ENCODE measurements at regions of chr2 and their contacts with region 1.

Region 1: GRCh38 chr2:37196320-37197195 is at the start of gene CEBPZOS:
- DNase-seq: peak; percentile 69 to 78
- H3K4me3 ChIP-seq: peak within 1 kb of the TSS; percentile 65
- H3K27ac ChIP-seq: peak within 1 kb of the TSS; percentile 41
- H3K4me1 ChIP-seq: peaks cover 16% of the 10 kb centered on the region
- H3K27me3 ChIP-seq: no peaks in the 10 kb centered on the region
- CTCF ChIP-seq: no peak
- total RNA-seq, gene CEBPZOS: 46.5 and 53.2 TPM in 2 replicates

Region 2: DNA sequence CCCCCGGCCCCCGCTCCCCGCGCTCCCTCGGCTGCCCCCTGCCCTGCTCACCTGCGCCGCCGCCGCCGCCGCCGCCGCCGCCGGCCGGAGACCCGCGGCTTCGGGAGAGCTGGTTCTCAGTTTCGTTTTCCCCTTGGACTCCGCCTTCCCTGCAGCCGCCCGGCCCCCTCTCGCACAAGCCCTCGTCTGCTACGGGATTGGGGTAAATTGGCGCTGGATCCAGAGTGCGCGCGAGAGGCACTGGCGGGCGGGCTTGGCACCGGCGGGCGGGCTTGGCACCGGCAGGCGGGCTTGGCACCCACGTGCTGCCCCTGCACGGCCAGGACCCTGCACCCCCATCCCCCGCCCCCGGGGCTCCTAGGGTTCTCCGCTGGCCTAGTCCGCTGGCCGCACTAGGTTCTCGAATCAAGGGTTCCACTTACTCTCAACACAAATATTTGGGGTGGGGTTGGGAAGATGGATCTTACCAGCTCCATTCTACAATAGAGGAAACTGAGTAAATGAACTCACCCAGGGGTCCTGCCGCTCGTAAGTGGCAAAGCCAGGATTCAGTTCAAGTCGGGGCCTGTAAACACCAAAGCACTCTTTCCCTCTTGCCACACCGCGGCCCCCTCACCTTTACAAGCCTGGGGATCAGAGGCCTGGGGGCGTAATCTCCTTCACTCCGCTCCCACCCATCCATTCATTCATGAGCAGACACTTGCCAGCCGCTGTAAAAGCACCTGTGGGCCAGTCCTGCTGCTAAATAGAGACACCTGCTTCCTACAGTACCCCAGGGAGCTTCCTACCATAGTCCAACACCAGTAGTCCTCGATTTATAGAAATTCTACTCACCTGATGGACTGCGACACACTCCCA is 39.5 kb before region 1 on chr2 and contains the start of gene EIF2AK2:
- CTCF ChIA-PET with region 1: no interaction called
- POLR2A ChIA-PET with region 1: interaction called, 3 read pairs
- intact Hi-C with region 1: loop called (anchors 2 kb)
- DNase-seq: peak; percentile 77 to 85
- H3K4me3 ChIP-seq: peak within 1 kb of the TSS; percentile 95
- H3K27ac ChIP-seq: peak within 1 kb of the TSS; percentile 74
- H3K4me1 ChIP-seq: peaks cover 21% of the 10 kb centered on the region
- H3K27me3 ChIP-seq: no peaks in the 10 kb centered on the region
- CTCF ChIP-seq: no peak
- total RNA-seq, gene EIF2AK2: 39.8 and 61.2 TPM in 2 replicates

Region 3: GRCh38 chr2:37215250-37215649 is 18.7 kb after region 1 on chr2:
- CTCF ChIA-PET with region 1: interaction called, 3 read pairs
- POLR2A ChIA-PET with region 1: no interaction called
- intact Hi-C with region 1: loop called (anchors 2 kb)
- DNase-seq: no peak
- H3K4me3 ChIP-seq: no peak overlapping the region
- H3K27ac ChIP-seq: peak overlapping the region; percentile 68
- H3K4me1 ChIP-seq: peaks cover 9% of the 10 kb centered on the region
- H3K27me3 ChIP-seq: no peaks in the 10 kb centered on the region
- CTCF ChIP-seq: no peak

Region 4: GRCh38 chr2:37472959-37473358 is 276.4 kb after region 1 on chr2:
- CTCF ChIA-PET with region 1: no interaction called
- POLR2A ChIA-PET with region 1: no interaction called
- intact Hi-C with region 1: no loop called
- DNase-seq: peak; percentile 52 to 83
- H3K4me3 ChIP-seq: no peak overlapping the region
- H3K27ac ChIP-seq: peak overlapping the region; percentile 65
- H3K4me1 ChIP-seq: peaks cover 25% of the 10 kb centered on the region
- H3K27me3 ChIP-seq: no peaks in the 10 kb centered on the region
- CTCF ChIP-seq: no peak